RWPE1 (cell line): ENCODE measurements at regions of chr9 and their contacts with region 1.

Region 1: GRCh38 chr9:72038890-72039410 is 21.5 kb downstream of the C9orf57 start:
- DNase-seq: peak; percentile 83
- H3K27ac ChIP-seq: no peak overlapping the region
- CTCF ChIP-seq: peak; percentile 92

Region 2: DNA sequence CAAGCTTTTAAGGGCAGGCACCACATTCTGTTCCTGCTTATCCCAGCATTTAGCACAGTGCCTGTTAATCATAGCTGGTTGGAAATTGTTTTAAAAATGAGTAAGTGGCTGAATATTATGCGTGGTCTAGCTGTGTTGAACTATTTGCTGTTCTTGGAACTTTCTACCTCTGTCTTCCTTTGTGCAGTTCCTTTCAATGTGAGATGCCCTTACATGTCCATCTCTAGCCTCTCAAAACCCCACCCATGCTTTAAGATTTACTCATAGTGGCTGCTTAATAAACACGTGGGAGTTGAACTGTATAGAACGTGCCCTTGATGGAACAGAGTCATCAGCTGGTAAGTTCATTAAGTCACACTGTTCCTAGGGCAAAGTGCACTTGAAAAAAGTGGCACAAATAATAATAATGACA is 13.0 kb before region 1 on chr9:
- CTCF ChIA-PET with region 1: interaction called, 15 read pairs
- POLR2A ChIA-PET with region 1: no interaction called
- DNase-seq: peak; percentile 72
- H3K27ac ChIP-seq: peak overlapping the region; percentile 57; the same call in 1 of the 2 replicates
- CTCF ChIP-seq: no peak

Region 3: DNA sequence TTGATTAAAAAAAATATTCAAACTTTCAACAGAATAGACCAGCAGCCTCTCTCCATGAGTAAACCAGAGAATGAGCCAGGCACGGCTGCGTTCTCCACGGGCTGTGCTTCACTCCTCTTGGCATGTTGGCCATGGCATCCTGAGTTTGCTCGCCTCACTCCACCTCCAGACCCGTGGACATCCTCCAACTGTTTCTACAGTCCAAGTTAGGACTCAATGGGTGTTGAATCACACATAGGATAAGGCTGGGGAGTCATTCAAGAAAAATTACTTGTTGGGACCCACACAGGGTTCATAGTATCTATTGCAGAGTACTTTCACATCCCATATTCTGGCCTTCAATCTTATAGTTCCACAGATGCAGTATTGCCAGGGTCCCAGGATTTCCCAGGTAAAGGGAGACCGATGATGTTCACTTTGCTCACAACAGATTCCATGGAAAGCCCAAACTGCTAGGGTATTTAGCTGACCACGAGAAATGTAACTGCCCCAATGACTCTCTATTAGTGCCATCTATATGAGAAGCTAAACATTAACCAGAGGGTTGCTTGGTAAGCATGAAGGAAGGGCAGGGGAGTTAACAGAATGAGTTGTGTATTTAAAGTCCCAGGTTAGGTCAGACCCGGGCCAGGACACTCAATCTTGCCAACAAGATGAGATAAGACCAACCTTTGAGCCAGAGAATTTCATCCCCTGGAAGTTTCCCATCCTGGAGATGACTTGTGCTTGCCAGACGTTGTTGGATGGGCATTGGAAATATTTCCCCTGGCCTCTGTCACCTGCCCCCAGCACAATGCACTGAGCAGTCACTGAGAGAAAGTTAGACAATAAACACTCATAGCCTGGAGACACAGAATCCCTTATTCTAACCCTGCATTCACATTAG is 90.6 kb after region 1 on chr9:
- CTCF ChIA-PET with region 1: no interaction called
- POLR2A ChIA-PET with region 1: no interaction called
- DNase-seq: no peak
- H3K27ac ChIP-seq: no peak overlapping the region
- CTCF ChIP-seq: no peak

Region 4: GRCh38 chr9:72271613-72272478 is 232.9 kb after region 1 on chr9:
- CTCF ChIA-PET with region 1: interaction called, 72 read pairs
- POLR2A ChIA-PET with region 1: no interaction called
- DNase-seq: peak; percentile 80
- H3K27ac ChIP-seq: no peak overlapping the region
- CTCF ChIP-seq: peak; percentile 85

Region 5: DNA sequence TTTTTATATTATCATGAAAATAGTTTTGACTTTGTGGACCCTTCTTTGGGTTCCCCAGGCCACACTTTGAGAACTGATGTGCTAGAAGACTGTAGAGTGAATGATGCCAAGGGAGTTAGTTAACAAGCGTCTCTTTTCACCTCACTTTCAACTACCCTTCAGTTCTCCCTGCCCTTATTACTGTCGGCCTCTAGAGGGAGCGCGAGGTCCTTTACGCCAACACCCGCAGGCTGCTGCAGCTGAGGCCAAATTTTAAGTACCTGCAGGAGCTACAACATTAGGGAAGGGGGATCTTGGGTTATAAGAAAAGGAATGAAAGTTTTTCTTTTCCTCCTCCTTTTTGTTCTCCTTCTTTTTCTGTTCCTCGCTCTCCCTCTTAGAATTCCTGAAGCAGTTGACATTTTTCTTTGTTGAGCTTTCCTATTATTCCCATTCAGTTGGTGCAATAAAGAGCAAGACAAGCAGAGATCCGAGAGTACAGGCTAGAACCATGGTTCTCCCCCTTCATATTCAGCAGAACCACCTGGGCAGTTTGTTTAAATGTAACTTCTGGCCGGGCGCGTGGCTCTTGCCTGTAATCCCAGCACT is 242.1 kb after region 1 on chr9:
- CTCF ChIA-PET with region 1: interaction called, 25 read pairs
- POLR2A ChIA-PET with region 1: no interaction called
- DNase-seq: peak; percentile 69
- H3K27ac ChIP-seq: no peak overlapping the region
- CTCF ChIP-seq: peak; percentile 92